ENCODE measurements at regions of chr14 and their contacts with region 1.

Region 1: GRCh38 chr14:21978184-21978998 is 304.8 kb upstream of the OR4E1 start:
- DNase-seq: peak; percentile 33
- H3K4me3 ChIP-seq: no peak overlapping the region; a peak in 1 of 4 replicates
- H3K27ac ChIP-seq: no peak overlapping the region
- H3K4me1 ChIP-seq: no peaks in the 10 kb centered on the region
- H3K27me3 ChIP-seq: no peaks in the 10 kb centered on the region
- CTCF ChIP-seq: peak; percentile 80
- EP300 ChIP-seq: no peak
- RAD21 ChIP-seq: peak; percentile 27; the same call in 1 of the 2 replicates

Region 2: DNA sequence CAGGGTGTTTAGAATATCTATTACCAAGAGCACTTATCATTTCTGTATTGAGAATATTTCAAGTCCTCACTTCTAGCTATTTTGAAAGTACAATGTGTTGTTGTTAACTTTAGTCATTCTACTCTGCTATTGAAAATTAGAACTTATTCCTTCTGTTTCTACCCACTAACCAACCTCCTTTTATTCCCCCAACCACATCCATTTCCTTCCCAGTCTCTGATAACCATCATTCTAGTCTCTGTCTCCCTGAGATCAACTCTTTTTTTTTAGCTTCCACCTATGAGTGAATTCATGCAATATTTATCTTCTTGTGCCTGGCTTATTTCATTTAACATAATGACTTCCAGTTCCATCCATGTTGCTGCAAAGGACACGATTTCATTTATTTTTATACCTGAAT is 14.2 kb before region 1 on chr14:
- CTCF ChIA-PET with region 1: interaction called, 11 read pairs
- POLR2A ChIA-PET with region 1: no interaction called
- DNase-seq: no peak
- H3K4me3 ChIP-seq: no peak overlapping the region
- H3K27ac ChIP-seq: no peak overlapping the region
- H3K4me1 ChIP-seq: no peaks in the 10 kb centered on the region
- H3K27me3 ChIP-seq: no peaks in the 10 kb centered on the region
- CTCF ChIP-seq: no peak
- EP300 ChIP-seq: no peak
- RAD21 ChIP-seq: no peak

Region 3: DNA sequence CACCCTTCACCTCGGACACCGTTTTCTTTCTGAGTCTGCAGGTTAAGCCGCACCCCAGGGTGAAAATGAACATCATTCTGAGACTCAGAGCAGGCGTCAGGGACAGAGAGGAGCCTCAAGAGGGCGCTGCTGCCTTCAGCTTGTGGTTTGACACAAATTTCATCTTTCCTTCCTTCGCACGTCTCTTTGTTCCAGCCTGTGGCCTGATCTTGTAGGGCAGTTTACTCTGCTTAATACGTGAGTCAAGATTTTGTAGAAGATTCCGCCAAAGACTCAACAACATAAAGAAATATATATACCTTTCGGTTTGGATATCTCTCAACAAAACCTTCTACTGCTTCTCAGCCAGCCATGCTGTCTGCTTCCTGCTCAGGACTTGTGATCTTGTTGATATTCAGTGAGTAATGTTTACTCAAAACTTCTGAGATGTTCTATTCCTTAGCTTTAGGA is 24.5 kb after region 1 on chr14:
- CTCF ChIA-PET with region 1: interaction called, 16 read pairs
- POLR2A ChIA-PET with region 1: no interaction called
- DNase-seq: no peak
- H3K4me3 ChIP-seq: no peak overlapping the region
- H3K27ac ChIP-seq: no peak overlapping the region
- H3K4me1 ChIP-seq: no peaks in the 10 kb centered on the region
- H3K27me3 ChIP-seq: no peaks in the 10 kb centered on the region
- CTCF ChIP-seq: peak; percentile 54
- EP300 ChIP-seq: no peak
- RAD21 ChIP-seq: no peak

Measured in SK-N-SH (cell line).